WTC11 (cell line): ENCODE measurements at regions of chr2 and their contacts with region 1.

Region 1: GRCh38 chr2:187499941-187500532 is 52.0 kb upstream of the CALCRL start:
- DNase-seq: peak; percentile 67
- ATAC-seq: peak; percentile 49; the same call in 1 of the 2 replicates
- H3K4me3 Mint-ChIP-seq: no peak overlapping the region
- H3K27ac Mint-ChIP-seq: no peak overlapping the region
- H3K4me1 Mint-ChIP-seq: peaks cover 23% of the 10 kb centered on the region
- H3K27me3 Mint-ChIP-seq: no peaks in the 10 kb centered on the region
- CTCF ChIP-seq: peak; percentile 82

Region 2: DNA sequence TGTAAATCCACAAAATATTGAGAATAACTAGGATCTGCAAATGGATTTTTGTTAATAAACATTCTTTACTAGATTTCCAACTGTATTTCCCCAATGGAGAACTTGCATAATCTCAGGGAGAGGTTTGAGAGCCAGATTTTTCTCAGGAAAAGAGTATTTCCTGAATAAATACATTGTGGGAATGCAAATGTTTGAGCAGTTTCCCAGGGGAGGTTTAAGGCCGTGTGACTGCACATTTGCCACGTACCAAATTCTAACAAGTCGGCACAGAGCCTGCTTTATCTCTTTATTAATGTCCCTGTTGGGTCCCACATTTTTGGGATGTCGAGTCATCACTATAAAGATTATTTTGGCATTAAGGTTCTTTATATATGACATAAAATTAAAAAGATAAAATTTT is 27.2 kb after region 1 on chr2:
- CTCF ChIA-PET with region 1: interaction called, 17 read pairs
- POLR2A ChIA-PET with region 1: no interaction called
- DNase-seq: no peak
- ATAC-seq: no peak
- H3K4me3 Mint-ChIP-seq: 0 out of 2 replicates have a peak overlapping the region, but pooled peaks have one; percentile 4
- H3K27ac Mint-ChIP-seq: peak overlapping the region; percentile 84
- H3K4me1 Mint-ChIP-seq: peaks cover 40% of the 10 kb centered on the region
- H3K27me3 Mint-ChIP-seq: no peaks in the 10 kb centered on the region
- CTCF ChIP-seq: no peak

Region 3: DNA sequence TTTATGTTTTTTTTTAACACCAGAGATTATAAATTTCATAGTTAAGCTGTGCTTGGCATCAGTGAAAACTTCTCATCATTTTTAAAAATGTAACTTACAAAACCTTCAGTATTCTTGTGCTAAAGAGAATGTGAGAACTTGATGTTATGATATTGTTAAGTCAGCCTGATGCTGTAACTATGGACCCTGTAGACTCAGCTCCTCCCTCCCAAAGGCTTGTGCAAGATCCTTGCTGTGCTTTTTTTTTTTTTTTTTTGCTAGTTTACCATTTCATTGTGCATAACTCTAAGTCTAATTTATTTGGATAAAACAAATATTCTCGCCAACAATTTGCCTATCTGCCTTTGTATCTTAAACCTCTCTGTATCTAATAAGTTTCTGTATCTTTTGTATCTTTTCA is 67.1 kb after region 1 on chr2:
- CTCF ChIA-PET with region 1: interaction called, 13 read pairs
- POLR2A ChIA-PET with region 1: no interaction called
- DNase-seq: no peak
- ATAC-seq: peak; percentile 44
- H3K4me3 Mint-ChIP-seq: no peak overlapping the region
- H3K27ac Mint-ChIP-seq: peak overlapping the region; percentile 18; the same call in 1 of the 2 replicates
- H3K4me1 Mint-ChIP-seq: peaks cover 31% of the 10 kb centered on the region
- H3K27me3 Mint-ChIP-seq: no peaks in the 10 kb centered on the region
- CTCF ChIP-seq: no peak

Region 4: GRCh38 chr2:187581125-187581896 is 81.3 kb after region 1 on chr2:
- CTCF ChIA-PET with region 1: interaction called, 195 read pairs
- POLR2A ChIA-PET with region 1: no interaction called
- DNase-seq: no peak
- ATAC-seq: no peak
- H3K4me3 Mint-ChIP-seq: no peak overlapping the region
- H3K27ac Mint-ChIP-seq: no peak overlapping the region
- H3K4me1 Mint-ChIP-seq: peaks cover 16% of the 10 kb centered on the region
- H3K27me3 Mint-ChIP-seq: no peaks in the 10 kb centered on the region; the same call in 1 of the 2 replicates
- CTCF ChIP-seq: peak; percentile 80